ENCODE measurements at regions of chr11 and their contacts with region 1.

Region 1: GRCh38 chr11:3412837-3413236 is 33.9 kb upstream of the ZNF195 start:
- DNase-seq: no peak
- H3K4me3 ChIP-seq: no peak overlapping the region
- H3K4me1 ChIP-seq: no peaks in the 10 kb centered on the region
- H3K27me3 ChIP-seq: no peaks in the 10 kb centered on the region

Region 2: DNA sequence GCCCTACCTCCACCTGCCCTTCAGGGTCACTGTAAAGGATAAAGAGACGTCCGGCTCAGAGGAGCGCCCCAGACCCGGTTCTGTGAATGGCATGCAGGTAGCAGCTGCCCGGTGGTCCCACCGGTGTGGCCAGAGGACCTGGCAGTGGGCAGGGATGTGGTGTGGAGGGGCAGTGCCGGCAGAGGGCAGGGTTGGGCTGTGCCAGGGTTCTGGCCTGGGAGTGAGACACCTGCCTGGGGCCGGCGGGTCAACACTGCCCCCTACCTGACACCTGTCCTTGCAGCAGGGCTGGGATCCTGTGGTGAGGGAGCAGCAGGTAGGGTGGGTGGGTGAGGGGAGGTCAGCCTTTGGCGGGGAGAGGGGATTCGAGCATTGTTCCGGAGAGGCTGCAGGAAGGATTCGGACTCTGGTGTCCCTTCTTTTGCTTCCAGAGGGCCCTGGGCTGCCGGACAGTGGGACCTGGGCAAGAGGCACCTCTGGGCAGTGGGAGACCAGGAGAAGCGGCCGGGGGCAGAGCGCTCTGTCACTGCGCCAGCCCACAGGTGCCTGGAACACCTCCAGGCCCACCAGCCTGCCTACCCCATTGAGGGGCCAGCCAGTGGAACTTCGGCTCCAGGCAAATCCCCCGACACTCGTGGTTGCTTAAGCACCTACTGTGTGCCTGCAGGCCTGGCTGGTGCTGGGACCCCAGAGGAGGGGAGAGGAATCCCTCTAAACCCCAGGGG is 482.0 kb before region 1 on chr11:
- in situ Hi-C with region 1: loop called (anchors 25 kb)
- DNase-seq: peak in 1 of 2 experiments; percentile 75
- H3K4me3 ChIP-seq: no peak overlapping the region
- H3K4me1 ChIP-seq: no peaks in the 10 kb centered on the region
- H3K27me3 ChIP-seq: peaks cover 49% of the 10 kb centered on the region

Region 3: DNA sequence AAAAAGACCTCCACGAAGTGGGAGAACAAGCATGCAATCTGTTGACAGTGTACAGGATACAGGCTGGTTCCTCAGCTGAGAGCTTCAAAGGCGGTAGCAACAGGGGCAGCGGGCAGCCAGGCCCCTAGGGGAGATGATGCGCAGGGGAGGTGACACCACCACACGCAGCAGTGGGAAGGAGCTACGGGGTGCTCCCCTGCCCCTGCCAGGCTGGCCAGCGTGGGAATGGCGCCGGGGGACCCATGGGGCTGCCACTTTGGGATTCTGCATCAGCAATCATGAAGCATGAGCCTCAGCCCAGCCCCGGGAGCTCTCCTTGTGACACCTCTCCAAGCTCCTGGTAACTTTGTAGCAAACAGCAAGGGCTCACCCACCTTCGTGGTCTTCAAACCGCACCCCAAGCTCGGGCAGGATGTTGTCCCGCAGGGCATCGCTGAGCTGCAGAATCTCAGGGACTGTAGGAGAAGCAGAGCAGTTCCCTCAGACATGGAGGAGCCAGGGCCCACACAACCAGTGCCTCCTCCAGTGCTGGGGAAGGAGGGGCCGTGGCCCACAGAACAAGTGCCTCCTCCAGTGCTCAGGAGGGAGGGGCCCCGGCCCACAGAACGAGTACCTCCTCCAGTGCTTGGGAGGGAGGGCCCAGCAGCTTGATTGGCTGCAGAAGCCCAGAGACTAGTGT is 406.2 kb before region 1 on chr11:
- in situ Hi-C with region 1: no loop called
- DNase-seq: no peak
- H3K4me3 ChIP-seq: no peak overlapping the region
- H3K4me1 ChIP-seq: no peaks in the 10 kb centered on the region
- H3K27me3 ChIP-seq: no peaks in the 10 kb centered on the region

Region 4: DNA sequence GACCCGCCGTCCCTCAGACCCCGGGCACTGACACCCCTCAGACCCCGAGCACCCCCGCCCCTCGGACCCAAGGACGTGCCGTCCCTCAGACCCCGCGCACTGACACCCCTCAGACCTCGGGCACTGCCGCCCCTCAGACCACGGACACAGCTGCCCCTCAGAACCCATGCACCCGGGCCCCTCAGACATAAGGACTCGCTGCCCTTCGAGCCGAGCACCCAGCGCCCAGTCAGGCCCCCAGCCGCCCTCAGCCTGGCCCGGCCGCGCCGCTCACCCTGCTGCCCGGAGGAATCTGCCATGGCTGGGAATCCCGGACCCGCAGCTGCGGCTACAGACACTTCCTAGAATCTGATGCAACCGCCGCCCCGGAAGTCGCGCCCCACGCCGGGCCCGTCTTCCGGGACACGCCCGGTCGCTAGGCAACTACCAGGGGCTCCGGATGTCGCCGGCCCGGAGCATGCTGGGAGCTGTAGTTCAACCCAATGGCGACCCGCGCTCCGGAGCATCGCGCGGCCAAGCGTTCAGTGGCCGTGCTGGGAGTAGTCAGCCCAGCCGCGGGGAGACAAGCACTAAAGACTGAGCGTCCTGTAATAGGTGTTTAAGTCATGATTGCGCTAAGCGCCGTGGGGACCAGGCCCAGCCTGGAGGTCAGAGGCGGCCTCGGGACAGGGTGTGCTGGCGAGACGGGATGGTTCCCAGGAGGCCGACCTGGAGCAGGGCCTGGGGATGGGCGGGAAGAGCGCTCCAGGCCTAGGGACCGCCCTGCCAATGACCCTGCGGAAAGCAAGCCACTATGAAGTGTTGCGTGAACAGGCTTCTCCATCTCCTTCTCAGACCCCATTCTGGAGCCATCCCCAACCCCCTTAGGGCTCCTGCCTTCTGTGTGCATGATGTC is 355.5 kb before region 1 on chr11 and contains the start of gene CARS1:
- in situ Hi-C with region 1: loop called (anchors 25 kb)
- DNase-seq: peak; percentile 90 to 97
- H3K4me3 ChIP-seq: peak within 1 kb of the TSS; percentile 100
- H3K4me1 ChIP-seq: peaks cover 14% of the 10 kb centered on the region
- H3K27me3 ChIP-seq: no peaks in the 10 kb centered on the region